A673 (cell line): ENCODE measurements at regions of chr6 and their contacts with region 1.

Region 1: DNA sequence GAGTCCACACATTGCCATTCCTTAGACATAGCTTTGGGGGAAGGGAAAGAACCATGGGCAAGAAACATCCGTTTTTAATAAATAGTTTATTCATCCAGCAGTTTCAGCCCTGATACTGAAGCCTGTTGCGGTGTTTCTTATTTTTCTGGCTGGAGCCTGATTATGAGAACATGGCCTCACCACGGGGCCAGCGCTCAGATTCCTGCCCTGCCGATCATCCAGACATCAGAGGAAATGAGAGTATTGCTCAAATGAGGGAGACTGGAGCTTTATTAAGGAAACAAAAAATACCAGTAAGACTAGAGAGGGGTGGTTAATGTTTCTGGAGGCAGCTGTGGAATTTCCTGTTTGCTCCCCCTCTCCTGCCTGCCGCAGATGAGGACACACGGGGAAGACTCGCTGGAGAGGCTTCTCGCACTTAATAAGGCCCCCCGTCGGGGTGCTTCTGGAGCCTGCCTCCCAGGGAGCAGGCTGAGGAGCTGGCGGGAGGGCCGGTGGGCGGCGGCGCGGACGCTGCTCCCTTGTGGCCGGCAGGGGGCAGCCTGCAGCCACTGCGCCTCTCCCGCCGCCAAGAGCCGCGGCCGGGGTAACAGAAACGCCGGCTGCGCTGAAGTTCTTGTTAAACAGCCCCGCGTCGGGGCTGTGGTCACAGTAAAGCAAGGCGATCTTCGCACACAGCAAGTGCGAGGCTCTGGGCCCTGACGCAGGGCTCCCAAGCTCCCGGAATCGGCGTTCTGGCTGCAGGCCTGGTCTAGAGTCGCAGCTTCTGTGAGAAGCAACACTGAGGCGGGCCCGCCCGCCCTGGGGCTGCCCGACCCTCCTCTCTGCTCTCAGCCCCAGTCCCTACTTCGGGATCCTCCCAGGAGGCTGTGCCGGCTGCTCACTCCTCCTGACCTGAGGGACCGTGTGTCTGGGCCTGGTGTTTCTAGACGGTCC is 17.5 kb downstream of the LEMD2 start:
- DNase-seq: peak; percentile 100
- H3K4me3 ChIP-seq: no peak overlapping the region
- H3K27ac ChIP-seq: peak overlapping the region; percentile 97
- H3K4me1 ChIP-seq: peaks cover 53% of the 10 kb centered on the region
- H3K27me3 ChIP-seq: no peaks in the 10 kb centered on the region
- CTCF ChIP-seq: peak; percentile 99

Region 2: GRCh38 chr6:33633462-33634158 is 137.8 kb before region 1 on chr6:
- CTCF ChIA-PET with region 1: no interaction called
- POLR2A ChIA-PET with region 1: no interaction called
- intact Hi-C with region 1: no loop called
- DNase-seq: peak; percentile 67
- H3K4me3 ChIP-seq: peak overlapping the region; percentile 47
- H3K27ac ChIP-seq: no peak overlapping the region
- H3K4me1 ChIP-seq: peaks cover 19% of the 10 kb centered on the region
- H3K27me3 ChIP-seq: no peaks in the 10 kb centered on the region
- CTCF ChIP-seq: no peak

Region 3: DNA sequence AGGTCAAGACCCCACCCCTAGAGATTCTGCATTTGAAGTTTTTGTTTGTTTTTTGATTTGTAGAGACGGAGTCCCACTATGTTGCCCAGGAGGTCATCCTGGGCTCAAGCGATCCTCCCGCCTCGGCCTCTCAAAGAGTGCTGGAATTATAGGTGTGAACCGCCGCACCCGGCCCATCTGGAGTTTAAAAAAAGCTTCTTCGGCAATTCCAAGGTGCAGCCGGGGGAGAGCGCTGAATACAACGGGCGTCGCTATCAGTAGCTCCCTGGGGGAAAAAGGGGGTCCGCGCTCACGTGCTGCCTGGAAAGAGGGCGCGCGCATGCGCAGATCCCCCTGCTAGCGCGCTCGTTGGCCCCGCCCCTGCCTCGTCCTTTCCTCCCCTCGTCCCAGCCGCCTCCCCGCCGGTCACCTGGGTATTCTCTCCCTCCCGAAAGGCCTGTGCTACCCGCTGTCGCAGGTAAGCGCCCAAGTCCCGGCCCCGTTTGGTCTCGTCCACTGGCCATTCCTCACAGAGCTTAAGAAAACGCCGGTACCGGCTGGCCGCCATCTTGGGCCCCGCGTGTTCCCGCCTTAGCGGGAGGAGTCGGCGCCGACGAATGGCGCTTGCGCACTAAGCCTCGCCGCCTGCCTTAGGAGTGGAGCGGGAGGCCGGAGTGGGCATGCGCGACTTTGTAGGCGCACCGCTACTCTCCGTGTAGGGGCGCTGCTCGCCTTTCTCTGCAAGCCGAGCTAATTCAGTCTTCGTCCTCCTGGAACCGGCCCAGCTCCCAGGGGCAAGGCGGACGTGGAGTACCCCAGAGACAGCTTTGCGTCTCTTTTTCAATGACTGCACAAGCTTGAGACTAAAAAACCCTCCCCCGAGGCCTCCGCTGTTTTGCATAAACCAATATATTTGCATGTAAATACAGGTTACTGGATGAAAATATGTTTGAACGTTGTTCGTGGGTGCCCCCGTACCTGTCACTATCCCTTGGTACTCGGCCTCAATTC is 60.0 kb before region 1 on chr6 and contains the start of gene UQCC2:
- CTCF ChIA-PET with region 1: interaction called, 9 read pairs
- POLR2A ChIA-PET with region 1: interaction called, 3 read pairs
- intact Hi-C with region 1: loop called (anchors 5 kb)
- DNase-seq: peak; percentile 98
- H3K4me3 ChIP-seq: peak within 1 kb of the TSS; percentile 64
- H3K27ac ChIP-seq: peak within 1 kb of the TSS; percentile 98
- H3K4me1 ChIP-seq: peaks cover 26% of the 10 kb centered on the region
- H3K27me3 ChIP-seq: no peaks in the 10 kb centered on the region
- CTCF ChIP-seq: peak; percentile 82
- total RNA-seq, gene UQCC2: 122 and 124 TPM in 2 replicates

Region 4: GRCh38 chr6:33744001-33744848 is 27.2 kb before region 1 on chr6:
- CTCF ChIA-PET with region 1: interaction called, 8 read pairs
- POLR2A ChIA-PET with region 1: interaction called, 8 read pairs
- intact Hi-C with region 1: loop called (anchors 2 kb)
- DNase-seq: peak; percentile 85
- H3K4me3 ChIP-seq: no peak overlapping the region
- H3K27ac ChIP-seq: no peak overlapping the region
- H3K4me1 ChIP-seq: peaks cover 22% of the 10 kb centered on the region
- H3K27me3 ChIP-seq: no peaks in the 10 kb centered on the region
- CTCF ChIP-seq: peak; percentile 97